Gastrocnemius medialis (tissue), 4 donors: ENCODE measurements at regions of chr13 and their contacts with region 1.

Region 1: GRCh38 chr13:98576963-98577822 is at the start of gene STK24:
- DNase-seq: peak; percentile 35 to 57
- ATAC-seq: peak; percentile 73 to 80
- H3K4me3 ChIP-seq: peak within 1 kb of the TSS; percentile 78 to 94 (median 89)
- H3K27ac ChIP-seq: peak within 1 kb of the TSS; percentile 95 to 97 (median 96)
- H3K4me1 ChIP-seq: peaks cover 24 to 42% of the 10 kb centered on the region in 2 donors
- H3K27me3 ChIP-seq: no peaks in the 10 kb centered on the region
- CTCF ChIP-seq: no peak
- POLR2A ChIP-seq: peak; percentile 56 to 65
- total RNA-seq, gene STK24: 28.7 to 68.4 (median 49.4) TPM

Region 2: DNA sequence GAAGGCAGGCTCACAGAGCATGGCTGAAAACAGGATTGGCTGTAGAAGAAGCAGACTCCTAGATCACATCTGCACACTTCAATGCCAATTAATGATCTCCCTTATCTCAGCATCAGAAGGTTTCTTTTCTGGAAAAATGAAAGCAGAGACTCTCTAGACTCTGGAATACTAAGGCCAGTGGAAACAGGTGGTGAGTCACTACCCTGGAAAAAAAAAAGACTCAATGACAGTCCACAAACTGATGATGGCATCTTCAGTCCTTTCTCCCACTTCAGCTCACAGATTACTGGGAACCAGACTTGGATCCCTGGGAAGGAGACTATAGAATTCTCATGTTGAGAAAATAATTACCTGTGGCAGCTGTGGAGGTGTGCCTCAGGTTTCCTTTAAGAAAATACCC is 1402.6 kb before region 1 on chr13:
- in situ Hi-C with region 1: no loop called
- intact Hi-C with region 1: no loop called
- DNase-seq: no peak
- ATAC-seq: no peak
- H3K4me3 ChIP-seq: no peak overlapping the region
- H3K27ac ChIP-seq: no peak overlapping the region
- H3K4me1 ChIP-seq: no peaks in the 10 kb centered on the region
- H3K27me3 ChIP-seq: no peaks in the 10 kb centered on the region
- CTCF ChIP-seq: no peak
- POLR2A ChIP-seq: no peak

Region 3: GRCh38 chr13:98370806-98371515 is 206.2 kb before region 1 on chr13:
- in situ Hi-C with region 1: no loop called
- intact Hi-C with region 1: loop called (anchors 2 kb)
- DNase-seq: no peak
- ATAC-seq: no peak
- H3K4me3 ChIP-seq: no peak overlapping the region
- H3K27ac ChIP-seq: no peak overlapping the region
- H3K4me1 ChIP-seq: peaks cover 15 to 19% of the 10 kb centered on the region in 2 donors
- H3K27me3 ChIP-seq: no peaks in the 10 kb centered on the region
- CTCF ChIP-seq: no peak
- POLR2A ChIP-seq: no peak

Region 4: DNA sequence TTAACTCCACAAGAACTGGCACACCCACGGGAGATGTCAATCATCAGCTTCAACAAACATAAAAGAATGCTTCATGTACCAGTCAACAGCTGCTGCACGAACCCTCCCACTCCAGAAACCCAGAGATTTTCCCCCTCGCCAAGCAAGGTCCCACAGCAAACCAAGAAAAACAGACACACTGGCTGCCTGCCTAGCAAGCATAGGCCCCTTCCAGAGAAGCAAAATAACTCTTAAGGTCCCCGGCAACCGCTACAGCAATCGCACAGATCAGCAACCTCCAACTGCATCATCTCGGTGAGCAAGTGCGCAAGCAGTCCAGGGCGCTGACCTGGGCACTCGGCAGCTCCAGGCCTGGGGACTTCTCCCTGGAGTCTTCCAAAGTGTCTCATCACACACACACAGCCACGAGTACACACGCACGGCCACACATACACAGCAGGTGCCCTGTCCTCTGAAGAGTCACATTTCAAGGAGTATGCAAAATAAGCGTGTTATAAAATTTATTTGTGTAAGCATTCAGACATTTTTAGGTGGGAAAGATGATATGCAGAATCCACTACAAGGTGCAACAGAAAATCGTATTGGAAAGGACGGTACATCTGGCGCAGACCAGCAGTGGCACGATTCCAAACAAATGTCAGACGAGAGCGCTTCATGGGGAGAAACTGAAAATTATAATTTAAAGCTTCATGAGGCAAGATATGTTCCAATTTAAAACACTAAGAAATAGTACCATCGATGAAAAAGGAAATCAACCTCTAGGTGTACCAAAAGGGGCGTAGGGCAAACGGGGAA is 125.3 kb before region 1 on chr13:
- in situ Hi-C with region 1: no loop called
- intact Hi-C with region 1: loop called (anchors 2 kb)
- DNase-seq: no peak
- ATAC-seq: no peak
- H3K4me3 ChIP-seq: no peak overlapping the region
- H3K27ac ChIP-seq: peak overlapping the region; percentile 5 to 32 (median 22)
- H3K4me1 ChIP-seq: peaks cover 18 to 35% of the 10 kb centered on the region in 2 donors
- H3K27me3 ChIP-seq: no peaks in the 10 kb centered on the region
- CTCF ChIP-seq: no peak
- POLR2A ChIP-seq: no peak

Region 5: GRCh38 chr13:98466634-98467236 is 110.5 kb before region 1 on chr13:
- in situ Hi-C with region 1: loop called in 2 of 4 experiments (anchors 10 kb)
- intact Hi-C with region 1: loop called (anchors 5 kb)
- DNase-seq: no peak
- ATAC-seq: peak in 1 of 2 donors; percentile 39
- H3K4me3 ChIP-seq: no peak overlapping the region
- H3K27ac ChIP-seq: no peak overlapping the region
- H3K4me1 ChIP-seq: peaks cover 13 to 15% of the 10 kb centered on the region in 2 donors
- H3K27me3 ChIP-seq: no peaks in the 10 kb centered on the region
- CTCF ChIP-seq: peak in 4 of 5 experiments; percentile 16 to 63 (median 45)
- POLR2A ChIP-seq: no peak

Region 6: DNA sequence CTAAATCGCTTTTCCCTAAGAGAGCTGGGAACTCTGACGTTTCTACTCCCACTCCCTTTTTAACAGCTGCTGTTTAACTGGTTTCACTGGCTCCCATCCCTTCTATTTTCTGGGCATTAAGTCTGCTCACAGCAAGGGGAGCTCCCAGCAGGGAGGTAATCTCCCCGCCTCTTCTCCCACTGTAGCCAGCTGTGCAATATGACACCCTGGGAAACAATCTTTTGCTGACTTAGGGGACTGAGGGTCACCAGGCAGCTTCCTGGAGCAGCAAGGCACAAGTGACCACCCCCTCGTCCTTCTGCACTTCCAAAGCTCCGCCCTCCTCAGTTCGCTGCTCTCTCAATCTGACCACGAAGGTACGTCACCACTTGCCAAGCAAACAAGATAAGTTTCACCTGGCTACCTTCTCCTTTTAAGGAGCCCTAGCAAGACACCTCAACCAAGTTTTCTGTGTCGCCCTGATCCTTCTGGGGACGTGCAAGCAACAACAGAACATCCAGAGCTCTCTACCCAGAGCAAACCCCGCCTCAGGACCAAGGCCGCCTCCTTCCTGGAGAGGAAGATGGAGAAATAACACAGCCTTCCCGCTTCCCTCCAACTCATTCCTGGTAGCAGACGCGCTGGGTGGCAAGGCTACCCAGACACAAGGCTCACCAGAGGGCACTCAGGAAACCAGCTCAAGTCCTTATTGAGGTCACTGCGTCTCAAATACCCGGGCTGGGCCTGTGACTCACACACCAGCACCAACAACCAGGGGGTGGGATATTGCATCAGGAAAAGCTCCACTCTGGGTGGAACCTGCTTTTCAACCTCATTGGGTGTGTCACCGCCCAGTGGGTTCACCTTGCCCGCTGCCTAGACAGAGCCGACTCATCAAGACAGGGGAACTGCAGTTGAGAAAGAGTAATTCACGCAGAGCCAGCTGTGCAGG is 92.6 kb before region 1 on chr13:
- in situ Hi-C with region 1: loop called in 2 of 4 experiments (anchors 10 kb)
- intact Hi-C with region 1: loop called (anchors 1 kb)
- DNase-seq: peak; percentile 79 to 95
- ATAC-seq: peak; percentile 78 to 82
- H3K4me3 ChIP-seq: peak overlapping the region; percentile 4 to 24 (median 10)
- H3K27ac ChIP-seq: peak overlapping the region; percentile 82 to 88 (median 86)
- H3K4me1 ChIP-seq: peaks cover 81 to 83% of the 10 kb centered on the region in 2 donors
- H3K27me3 ChIP-seq: no peaks in the 10 kb centered on the region
- CTCF ChIP-seq: no peak
- POLR2A ChIP-seq: peak; percentile 38 to 43

Region 7: DNA sequence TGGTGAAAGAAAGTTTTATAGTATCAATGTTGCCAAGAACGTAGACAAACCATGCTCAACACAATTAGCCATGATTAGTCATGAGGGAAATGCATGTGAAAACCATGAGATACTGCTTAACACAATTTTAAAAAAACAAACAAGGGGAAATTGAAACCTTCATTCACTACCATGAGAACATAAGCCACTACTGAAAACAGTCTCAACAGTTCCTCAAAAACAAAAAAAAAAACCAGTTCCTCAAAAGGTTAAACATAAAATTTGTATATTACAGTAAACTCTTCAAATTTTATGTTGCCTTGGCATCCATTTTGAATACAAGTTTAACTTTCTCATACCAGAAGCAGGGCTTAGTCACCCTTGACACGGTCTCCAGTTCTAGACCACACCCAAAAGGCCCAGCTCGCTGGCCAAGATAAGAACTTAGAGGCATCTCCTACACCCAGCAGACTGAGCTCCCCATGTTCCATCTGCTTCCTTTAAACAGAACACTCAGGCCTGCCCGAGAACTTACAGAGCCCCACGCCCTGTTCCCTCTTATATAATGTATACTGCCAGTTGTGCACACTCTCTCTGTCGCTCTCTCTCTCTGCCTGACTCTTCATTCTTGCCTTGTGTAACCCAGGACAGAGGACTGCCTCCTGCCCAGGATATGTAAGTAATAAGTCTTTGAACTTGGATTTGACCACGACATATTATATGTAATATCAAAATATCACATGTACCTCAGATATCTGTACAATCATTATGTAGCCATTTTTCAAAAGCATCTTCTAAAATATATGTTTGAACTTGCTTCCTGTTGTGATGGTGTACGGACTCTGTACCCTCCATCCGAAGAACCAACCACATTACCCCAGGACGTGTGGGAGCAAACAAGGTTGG is 67.7 kb before region 1 on chr13:
- in situ Hi-C with region 1: no loop called
- intact Hi-C with region 1: no loop called
- DNase-seq: peak; percentile 31 to 65
- ATAC-seq: peak; percentile 48 to 59
- H3K4me3 ChIP-seq: no peak overlapping the region
- H3K27ac ChIP-seq: peak overlapping the region; percentile 44 to 61 (median 50)
- H3K4me1 ChIP-seq: peaks cover 63 to 67% of the 10 kb centered on the region in 2 donors
- H3K27me3 ChIP-seq: no peaks in the 10 kb centered on the region
- CTCF ChIP-seq: no peak
- POLR2A ChIP-seq: no peak

Region 8: GRCh38 chr13:98609756-98610155 is 32.6 kb after region 1 on chr13:
- in situ Hi-C with region 1: no loop called
- intact Hi-C with region 1: no loop called
- DNase-seq: no peak
- ATAC-seq: no peak
- H3K4me3 ChIP-seq: no peak overlapping the region
- H3K27ac ChIP-seq: no peak overlapping the region
- H3K4me1 ChIP-seq: no peaks in the 10 kb centered on the region
- H3K27me3 ChIP-seq: no peaks in the 10 kb centered on the region
- CTCF ChIP-seq: no peak
- POLR2A ChIP-seq: no peak

Region 9: DNA sequence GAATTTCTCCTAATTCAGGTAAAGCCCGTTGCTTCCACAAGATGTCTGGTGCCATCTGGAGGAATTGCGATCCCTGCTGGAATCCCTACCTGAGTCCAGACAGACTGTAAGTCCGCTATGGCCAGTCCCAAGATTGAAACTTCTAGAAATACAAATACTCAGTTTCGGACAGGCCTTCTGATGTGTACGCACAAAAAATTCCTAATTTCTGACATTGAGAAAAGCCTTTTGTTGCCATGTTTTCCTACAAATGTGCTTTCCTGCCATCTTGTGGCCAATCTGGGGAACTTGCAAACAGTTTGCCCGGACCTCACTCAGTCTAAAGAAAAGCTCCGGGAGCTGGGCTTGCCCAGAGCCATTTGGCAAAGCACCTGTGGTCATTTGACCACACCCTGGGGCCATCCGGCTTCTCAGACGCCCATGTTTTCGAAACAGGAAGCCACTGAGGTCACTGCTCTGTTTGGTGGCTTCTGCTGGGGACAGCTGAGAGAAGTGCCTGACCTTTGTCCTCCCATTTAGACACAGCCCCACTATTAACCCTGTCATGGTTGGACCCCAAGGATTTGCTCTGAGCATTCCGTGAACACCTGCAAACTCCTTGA is 95.9 kb after region 1 on chr13:
- in situ Hi-C with region 1: no loop called
- intact Hi-C with region 1: loop called (anchors 5 kb)
- DNase-seq: peak; percentile 50 to 86
- ATAC-seq: peak; percentile 92 to 96
- H3K4me3 ChIP-seq: peak overlapping the region in 1 of 4 donors; percentile 0
- H3K27ac ChIP-seq: peak overlapping the region in 1 of 4 donors; percentile 34
- H3K4me1 ChIP-seq: peaks cover 6 to 10% of the 10 kb centered on the region in 2 donors
- H3K27me3 ChIP-seq: no peaks in the 10 kb centered on the region
- CTCF ChIP-seq: peak; percentile 70 to 90 (median 79)
- POLR2A ChIP-seq: no peak